Activated CD4-positive, alpha-beta T cell treated with anti-CD3 and anti-CD28 coated beads for 36 hours (primary cell): ENCODE measurements at regions of chr5 and their contacts with region 1.

Region 1: DNA sequence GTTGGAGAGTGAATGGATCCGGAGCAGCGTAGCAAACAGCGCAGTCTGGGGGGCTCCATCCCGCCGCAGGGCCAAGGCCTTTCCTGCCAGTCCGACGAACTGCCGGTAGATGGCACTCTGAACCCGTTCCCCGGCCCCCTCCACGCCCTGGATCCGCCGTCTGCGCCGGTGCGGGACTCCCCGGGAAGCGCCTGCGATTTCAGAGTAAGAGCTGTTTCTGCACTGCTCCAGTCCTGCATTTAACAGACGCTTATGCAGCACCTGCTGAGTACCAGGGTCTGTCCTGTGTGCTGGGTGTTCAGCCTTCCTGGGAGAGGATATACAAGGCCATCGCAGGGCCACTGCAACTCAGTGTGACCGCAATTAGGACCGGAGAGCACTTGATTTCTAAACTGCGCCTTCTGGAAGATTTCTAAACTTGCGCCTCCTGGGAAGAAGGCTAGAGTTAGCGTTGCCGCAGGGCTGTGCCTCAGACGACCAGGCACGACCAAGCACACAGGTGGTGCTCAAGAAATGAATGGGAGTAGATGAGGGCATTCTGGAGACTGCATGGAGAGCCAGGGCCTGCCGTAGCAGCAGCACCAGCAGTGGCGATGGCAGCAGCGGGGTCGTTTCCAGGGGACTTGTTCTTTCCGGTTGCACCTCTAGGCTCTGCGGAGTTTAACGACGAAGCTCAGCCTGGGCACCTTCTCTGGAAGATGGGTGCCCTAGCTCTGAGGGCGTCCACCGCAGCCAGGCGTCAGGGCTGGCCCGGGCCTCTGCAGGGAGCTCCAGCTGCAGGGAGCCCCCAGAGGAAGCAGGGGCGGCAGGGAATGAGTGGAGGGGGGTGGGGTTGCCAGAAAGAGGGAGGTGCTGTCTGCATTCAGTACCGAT is 14.3 kb upstream of the TIFAB start:
- DNase-seq: peak; percentile 88
- ATAC-seq: peak; percentile 93
- H3K4me3 Mint-ChIP-seq: peak overlapping the region; percentile 40
- H3K27ac Mint-ChIP-seq: no peak overlapping the region
- H3K4me1 Mint-ChIP-seq: peaks cover 4% of the 10 kb centered on the region
- H3K27me3 Mint-ChIP-seq: peaks cover 30% of the 10 kb centered on the region

Region 2: DNA sequence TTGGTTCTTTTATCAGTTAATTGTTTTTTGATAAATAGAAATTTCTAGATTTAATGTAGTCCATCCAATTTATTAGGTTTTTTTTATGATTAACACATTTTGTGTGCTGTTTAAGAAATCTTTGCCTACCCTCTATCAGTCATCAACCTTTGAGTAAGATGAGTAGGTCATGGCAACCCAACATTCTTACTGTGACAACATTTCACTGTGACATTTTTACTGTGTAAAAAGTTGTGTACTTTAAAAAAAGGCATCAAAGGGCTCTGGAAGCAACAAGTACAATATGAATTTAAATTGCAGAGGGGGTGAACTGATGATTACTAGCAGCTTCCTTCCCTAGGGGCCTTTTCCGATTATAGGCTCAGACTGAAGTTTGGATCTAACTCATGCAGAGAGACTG is 56.1 kb before region 1 on chr5:
- CTCF ChIA-PET with region 1: no interaction called
- POLR2A ChIA-PET with region 1: no interaction called
- intact Hi-C with region 1: no loop called
- DNase-seq: no peak
- ATAC-seq: no peak
- H3K4me3 Mint-ChIP-seq: no peak overlapping the region
- H3K27ac Mint-ChIP-seq: no peak overlapping the region
- H3K4me1 Mint-ChIP-seq: no peaks in the 10 kb centered on the region
- H3K27me3 Mint-ChIP-seq: peaks cover 7% of the 10 kb centered on the region

Region 3: DNA sequence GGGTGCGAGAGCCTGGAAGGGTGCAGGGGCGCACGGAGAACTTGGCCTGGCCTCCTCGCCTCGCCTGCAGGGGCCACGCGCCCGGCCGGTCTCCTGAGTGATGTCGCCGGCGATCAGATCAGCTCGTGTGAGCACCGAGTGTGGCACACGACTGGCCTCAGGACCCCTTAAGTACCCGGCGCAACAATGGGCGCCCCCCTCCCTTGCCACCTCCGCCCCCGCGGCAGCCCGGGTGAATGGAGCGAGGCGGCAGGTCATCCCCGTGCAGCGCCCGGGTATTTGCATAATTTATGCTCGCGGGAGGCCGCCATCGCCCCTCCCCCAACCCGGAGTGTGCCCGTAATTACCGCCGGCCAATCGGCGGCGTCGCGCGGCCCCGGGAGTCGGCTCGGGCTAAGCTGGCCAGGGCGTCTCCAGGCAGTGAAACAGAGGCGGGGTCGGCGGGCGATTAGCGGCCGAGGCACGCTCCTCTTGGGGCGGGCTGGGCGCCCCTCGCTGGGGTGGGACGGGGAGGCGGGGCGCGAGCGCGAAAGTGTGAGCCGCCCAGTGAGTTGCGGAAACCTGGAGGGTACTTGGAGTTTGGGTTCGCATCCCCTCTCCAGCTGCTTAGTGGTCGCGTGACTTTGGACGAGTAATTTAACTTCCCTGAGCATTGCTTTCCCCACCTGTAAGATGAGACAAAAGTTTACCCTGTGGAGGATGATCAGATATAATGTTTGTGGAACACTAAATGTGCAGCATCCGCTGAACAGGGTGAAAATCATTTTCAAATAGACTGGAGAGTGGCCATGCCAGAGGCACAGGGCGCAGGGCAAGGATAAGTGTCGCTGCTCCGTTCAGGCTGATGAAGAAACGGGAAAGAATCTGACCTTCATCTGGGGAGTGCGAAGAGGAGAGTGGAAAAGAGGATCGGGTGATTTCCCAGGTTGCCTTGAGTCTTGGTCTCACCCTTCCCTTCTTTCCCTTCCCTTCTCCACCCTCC is 69.7 kb after region 1 on chr5 and contains the start of gene NEUROG1:
- CTCF ChIA-PET with region 1: interaction called, 11 read pairs
- POLR2A ChIA-PET with region 1: no interaction called
- intact Hi-C with region 1: no loop called
- DNase-seq: peak; percentile 16
- ATAC-seq: no peak
- H3K4me3 Mint-ChIP-seq: no peak within 1 kb of the TSS
- H3K27ac Mint-ChIP-seq: no peak within 1 kb of the TSS
- H3K4me1 Mint-ChIP-seq: peaks cover 8% of the 10 kb centered on the region
- H3K27me3 Mint-ChIP-seq: peaks cover 70% of the 10 kb centered on the region
- total RNA-seq, gene NEUROG1: not detected

Region 4: GRCh38 chr5:135551593-135552447 is 85.4 kb after region 1 on chr5:
- CTCF ChIA-PET with region 1: interaction called, 198 read pairs
- POLR2A ChIA-PET with region 1: interaction called, 9 read pairs
- intact Hi-C with region 1: loop called (anchors 1 kb)
- DNase-seq: peak; percentile 80
- ATAC-seq: peak; percentile 77
- H3K4me3 Mint-ChIP-seq: no peak overlapping the region
- H3K27ac Mint-ChIP-seq: no peak overlapping the region
- H3K4me1 Mint-ChIP-seq: no peaks in the 10 kb centered on the region
- H3K27me3 Mint-ChIP-seq: peaks cover 43% of the 10 kb centered on the region

Region 5: GRCh38 chr5:135560858-135561257 is 94.4 kb after region 1 on chr5:
- CTCF ChIA-PET with region 1: interaction called, 282 read pairs
- POLR2A ChIA-PET with region 1: no interaction called
- intact Hi-C with region 1: loop called (anchors 1 to 5 kb)
- DNase-seq: peak; percentile 90
- ATAC-seq: peak; percentile 96
- H3K4me3 Mint-ChIP-seq: no peak overlapping the region
- H3K27ac Mint-ChIP-seq: no peak overlapping the region
- H3K4me1 Mint-ChIP-seq: peaks cover 8% of the 10 kb centered on the region
- H3K27me3 Mint-ChIP-seq: peaks cover 32% of the 10 kb centered on the region

Region 6: GRCh38 chr5:135565725-135566421 is 99.5 kb after region 1 on chr5:
- CTCF ChIA-PET with region 1: interaction called, 282 read pairs
- POLR2A ChIA-PET with region 1: no interaction called
- intact Hi-C with region 1: loop called (anchors 1 to 5 kb)
- DNase-seq: peak; percentile 85
- ATAC-seq: peak; percentile 72
- H3K4me3 Mint-ChIP-seq: no peak overlapping the region
- H3K27ac Mint-ChIP-seq: no peak overlapping the region
- H3K4me1 Mint-ChIP-seq: peaks cover 2% of the 10 kb centered on the region
- H3K27me3 Mint-ChIP-seq: peaks cover 5% of the 10 kb centered on the region

Region 7: DNA sequence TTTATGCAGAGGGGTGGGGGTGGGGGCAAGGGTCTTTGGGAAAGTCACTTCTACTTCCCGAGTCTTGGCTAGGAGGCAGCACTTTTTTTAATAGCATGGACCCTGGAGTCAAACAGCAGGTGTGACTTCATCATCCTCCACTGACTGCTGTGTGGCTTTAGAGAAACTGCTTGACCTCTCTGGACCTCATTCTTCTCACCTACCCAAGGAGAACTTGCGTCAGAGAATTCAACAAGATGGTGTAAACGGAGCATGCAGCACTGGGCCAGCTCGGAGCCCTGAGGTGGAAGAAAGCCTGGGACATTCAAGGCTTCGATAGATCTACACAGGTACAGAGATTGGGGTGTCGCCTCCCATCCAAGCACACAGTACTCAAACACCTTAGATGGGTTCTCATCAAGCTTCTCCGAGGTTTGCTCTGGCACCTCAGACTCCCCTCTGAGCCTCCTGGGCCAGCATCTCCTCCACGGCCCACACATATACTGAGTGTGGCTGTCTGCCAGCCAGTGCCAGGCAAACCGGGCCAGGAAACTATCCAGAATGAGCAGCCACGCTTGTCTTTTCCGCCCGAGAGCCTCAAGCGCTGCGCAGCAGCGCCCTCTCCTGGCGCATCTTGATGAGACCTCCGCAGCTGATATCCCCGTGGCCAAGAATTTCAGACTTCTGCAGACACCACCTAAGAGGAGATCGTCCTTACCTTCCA is 363.4 kb after region 1 on chr5:
- CTCF ChIA-PET with region 1: interaction called, 12 read pairs
- POLR2A ChIA-PET with region 1: no interaction called
- intact Hi-C with region 1: loop called in 1 of 2 experiments (anchors 1 kb)
- DNase-seq: peak; percentile 77
- ATAC-seq: peak; percentile 57
- H3K4me3 Mint-ChIP-seq: no peak overlapping the region
- H3K27ac Mint-ChIP-seq: no peak overlapping the region
- H3K4me1 Mint-ChIP-seq: peaks cover 3% of the 10 kb centered on the region
- H3K27me3 Mint-ChIP-seq: peaks cover 44% of the 10 kb centered on the region